ENCODE measurements at regions of chr12 and their contacts with region 1.

Region 1: GRCh38 chr12:78584695-78585531 is 279.7 kb upstream of the SYT1 start:
- DNase-seq: peak; percentile 43
- H3K4me3 ChIP-seq: no peak overlapping the region
- H3K27ac ChIP-seq: no peak overlapping the region
- H3K4me1 ChIP-seq: no peaks in the 10 kb centered on the region
- CTCF ChIP-seq: peak; percentile 85

Region 2: GRCh38 chr12:77925536-77926108 is 659.3 kb before region 1 on chr12:
- CTCF ChIA-PET with region 1: no interaction called
- POLR2A ChIA-PET with region 1: no interaction called
- intact Hi-C with region 1: no loop called
- DNase-seq: peak; percentile 90
- H3K4me3 ChIP-seq: no peak overlapping the region
- H3K27ac ChIP-seq: no peak overlapping the region
- H3K4me1 ChIP-seq: no peaks in the 10 kb centered on the region
- CTCF ChIP-seq: peak; percentile 100

Region 3: GRCh38 chr12:78002878-78003277 is 582.0 kb before region 1 on chr12:
- CTCF ChIA-PET with region 1: no interaction called
- POLR2A ChIA-PET with region 1: no interaction called
- intact Hi-C with region 1: loop called (anchors 5 kb)
- DNase-seq: peak; percentile 17
- H3K4me3 ChIP-seq: no peak overlapping the region
- H3K27ac ChIP-seq: no peak overlapping the region
- H3K4me1 ChIP-seq: peaks cover 28% of the 10 kb centered on the region
- CTCF ChIP-seq: peak; percentile 55; the same call in 1 of the 2 replicates

Region 4: DNA sequence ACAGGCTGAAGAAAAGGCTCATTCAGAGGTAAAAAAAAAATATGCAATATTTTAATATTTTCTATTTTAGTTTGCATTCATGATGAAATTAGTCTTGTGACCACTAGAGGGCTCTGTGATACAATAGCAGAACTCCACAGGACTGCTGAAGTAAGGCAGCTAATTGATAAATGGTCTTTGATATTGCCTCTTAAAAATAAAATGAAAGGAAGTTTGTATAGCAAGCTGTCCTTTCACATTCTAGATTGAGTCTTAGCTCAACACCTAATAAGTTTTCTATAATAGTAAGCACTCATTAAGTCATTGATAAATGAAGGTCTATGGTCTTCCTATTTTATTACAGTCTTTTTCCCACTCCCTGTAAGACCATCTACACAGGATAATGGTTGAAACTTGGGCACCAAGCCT is 438.5 kb before region 1 on chr12:
- CTCF ChIA-PET with region 1: no interaction called
- POLR2A ChIA-PET with region 1: no interaction called
- intact Hi-C with region 1: loop called (anchors 10 kb)
- DNase-seq: peak; percentile 61
- H3K4me3 ChIP-seq: no peak overlapping the region
- H3K27ac ChIP-seq: no peak overlapping the region
- H3K4me1 ChIP-seq: no peaks in the 10 kb centered on the region
- CTCF ChIP-seq: peak; percentile 93

Region 5: GRCh38 chr12:78229591-78230101 is 355.3 kb before region 1 on chr12:
- CTCF ChIA-PET with region 1: no interaction called
- POLR2A ChIA-PET with region 1: no interaction called
- intact Hi-C with region 1: loop called (anchors 10 kb)
- DNase-seq: peak; percentile 60
- H3K4me3 ChIP-seq: no peak overlapping the region
- H3K27ac ChIP-seq: no peak overlapping the region
- H3K4me1 ChIP-seq: no peaks in the 10 kb centered on the region
- CTCF ChIP-seq: peak; percentile 90

Region 6: GRCh38 chr12:78392918-78393317 is 192.0 kb before region 1 on chr12:
- CTCF ChIA-PET with region 1: no interaction called
- POLR2A ChIA-PET with region 1: no interaction called
- intact Hi-C with region 1: loop called (anchors 1 kb)
- DNase-seq: peak; percentile 40
- H3K4me3 ChIP-seq: no peak overlapping the region
- H3K27ac ChIP-seq: no peak overlapping the region
- H3K4me1 ChIP-seq: peaks cover 17% of the 10 kb centered on the region
- CTCF ChIP-seq: peak; percentile 74

Region 7: GRCh38 chr12:78530100-78530765 is 54.7 kb before region 1 on chr12:
- CTCF ChIA-PET with region 1: no interaction called
- POLR2A ChIA-PET with region 1: no interaction called
- intact Hi-C with region 1: no loop called
- DNase-seq: no peak
- H3K4me3 ChIP-seq: no peak overlapping the region
- H3K27ac ChIP-seq: no peak overlapping the region
- H3K4me1 ChIP-seq: no peaks in the 10 kb centered on the region
- CTCF ChIP-seq: no peak

Measured in OCI-LY7 (cell line).